ENCODE measurements at regions of chr3 and their contacts with region 1.

Region 1: DNA sequence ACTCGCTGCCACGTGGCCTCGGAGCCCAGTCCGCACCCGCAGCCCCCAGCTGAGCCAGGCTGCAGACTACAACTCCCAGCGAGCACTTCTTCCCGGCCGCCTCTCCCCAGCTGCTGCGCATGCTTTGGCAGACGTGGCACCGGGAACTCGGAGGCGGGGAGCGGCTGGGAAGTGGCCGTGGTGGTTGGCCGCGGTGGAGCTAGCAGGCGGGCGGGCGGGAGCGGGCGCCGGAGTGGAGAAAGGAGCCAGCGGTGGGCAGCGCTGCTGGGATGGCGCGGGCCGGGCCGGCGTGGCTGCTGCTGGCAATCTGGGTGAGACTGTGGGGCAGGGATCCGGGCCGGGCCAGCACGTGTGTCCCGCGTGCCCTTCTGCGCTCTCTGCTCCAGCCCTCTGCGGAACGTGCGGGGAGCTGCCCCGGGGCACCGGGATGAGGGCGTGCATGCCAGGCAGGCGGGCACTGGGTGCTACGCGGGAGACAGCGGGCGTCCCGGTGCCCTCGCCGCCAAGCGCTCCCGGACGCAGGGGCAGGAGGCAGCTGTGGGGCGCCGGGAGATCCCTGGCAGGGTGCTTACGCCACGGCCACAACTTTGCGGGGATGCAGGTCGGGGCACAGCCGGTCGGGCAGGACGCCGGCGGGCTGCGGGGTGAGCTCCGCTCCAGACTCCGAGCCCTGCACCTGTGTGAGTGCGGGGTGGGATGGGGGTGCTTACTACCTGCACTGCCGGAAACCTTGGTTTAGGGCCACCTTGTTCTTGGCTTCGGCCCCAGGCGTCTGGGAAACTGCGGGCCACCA is at the start of gene PDIA5:
- DNase-seq: peak; percentile 95
- ATAC-seq: peak; percentile 89
- H3K4me3 ChIP-seq: peak within 1 kb of the TSS; percentile 86
- H3K27ac ChIP-seq: peak within 1 kb of the TSS; percentile 25
- H3K4me1 ChIP-seq: peaks cover 15% of the 10 kb centered on the region
- H3K27me3 ChIP-seq: no peaks in the 10 kb centered on the region
- CTCF ChIP-seq: no peak
- total RNA-seq, gene PDIA5: 24.6 and 29.7 TPM in 2 replicates

Region 2: GRCh38 chr3:122415720-122416654 is 651.1 kb before region 1 on chr3 and contains the start of gene WDR5B:
- CTCF ChIA-PET with region 1: no interaction called
- POLR2A ChIA-PET with region 1: interaction called, 15 read pairs
- intact Hi-C with region 1: no loop called
- DNase-seq: peak; percentile 99
- ATAC-seq: peak; percentile 90
- H3K4me3 ChIP-seq: peak within 1 kb of the TSS; percentile 75
- H3K27ac ChIP-seq: peak within 1 kb of the TSS; percentile 74
- H3K4me1 ChIP-seq: peaks cover 27% of the 10 kb centered on the region
- H3K27me3 ChIP-seq: no peaks in the 10 kb centered on the region
- CTCF ChIP-seq: no peak
- total RNA-seq, gene WDR5B: 3.1 and 4.0 TPM in 2 replicates

Region 3: DNA sequence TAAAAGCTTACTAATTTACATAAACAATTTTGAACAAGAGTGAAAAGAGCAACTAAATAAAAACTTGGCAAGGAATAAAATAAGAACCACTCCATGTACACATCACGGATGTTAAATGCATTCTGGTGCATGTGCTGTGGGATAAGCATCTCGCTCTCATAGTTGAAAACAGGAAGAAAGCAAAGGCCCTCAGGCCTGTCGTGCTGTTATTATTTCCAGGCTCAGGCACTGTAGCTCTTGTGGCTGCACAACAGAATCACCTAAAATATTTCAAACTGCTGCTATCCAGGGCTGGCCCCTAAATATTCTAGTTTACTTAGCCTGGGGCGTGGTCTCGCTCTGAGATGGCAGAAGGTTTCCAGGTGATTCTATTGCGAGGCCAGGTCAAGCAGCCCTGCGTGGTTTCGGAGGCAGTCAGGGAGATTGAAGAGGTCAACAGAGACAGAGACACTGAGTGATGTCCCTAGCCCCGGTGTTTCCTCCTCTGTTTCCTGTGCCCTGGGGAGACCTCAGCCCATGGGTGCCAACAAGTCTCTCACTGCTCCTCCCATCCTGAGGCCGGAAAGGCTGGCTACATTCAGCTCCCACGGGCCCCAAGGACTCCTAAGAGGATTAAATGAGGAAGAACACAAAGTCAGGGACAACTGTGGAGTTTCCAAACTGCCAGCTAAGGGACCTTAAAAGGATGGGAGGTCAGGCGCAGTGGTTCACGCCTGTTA is 18.4 kb before region 1 on chr3:
- CTCF ChIA-PET with region 1: interaction called, 3 read pairs
- POLR2A ChIA-PET with region 1: interaction called, 11 read pairs
- intact Hi-C with region 1: no loop called
- DNase-seq: no peak
- ATAC-seq: no peak
- H3K4me3 ChIP-seq: no peak overlapping the region
- H3K27ac ChIP-seq: no peak overlapping the region
- H3K4me1 ChIP-seq: peaks cover 5% of the 10 kb centered on the region; the same call in 1 of the 2 replicates
- H3K27me3 ChIP-seq: peaks cover 8% of the 10 kb centered on the region; the same call in 1 of the 2 replicates
- CTCF ChIP-seq: no peak

Region 4: DNA sequence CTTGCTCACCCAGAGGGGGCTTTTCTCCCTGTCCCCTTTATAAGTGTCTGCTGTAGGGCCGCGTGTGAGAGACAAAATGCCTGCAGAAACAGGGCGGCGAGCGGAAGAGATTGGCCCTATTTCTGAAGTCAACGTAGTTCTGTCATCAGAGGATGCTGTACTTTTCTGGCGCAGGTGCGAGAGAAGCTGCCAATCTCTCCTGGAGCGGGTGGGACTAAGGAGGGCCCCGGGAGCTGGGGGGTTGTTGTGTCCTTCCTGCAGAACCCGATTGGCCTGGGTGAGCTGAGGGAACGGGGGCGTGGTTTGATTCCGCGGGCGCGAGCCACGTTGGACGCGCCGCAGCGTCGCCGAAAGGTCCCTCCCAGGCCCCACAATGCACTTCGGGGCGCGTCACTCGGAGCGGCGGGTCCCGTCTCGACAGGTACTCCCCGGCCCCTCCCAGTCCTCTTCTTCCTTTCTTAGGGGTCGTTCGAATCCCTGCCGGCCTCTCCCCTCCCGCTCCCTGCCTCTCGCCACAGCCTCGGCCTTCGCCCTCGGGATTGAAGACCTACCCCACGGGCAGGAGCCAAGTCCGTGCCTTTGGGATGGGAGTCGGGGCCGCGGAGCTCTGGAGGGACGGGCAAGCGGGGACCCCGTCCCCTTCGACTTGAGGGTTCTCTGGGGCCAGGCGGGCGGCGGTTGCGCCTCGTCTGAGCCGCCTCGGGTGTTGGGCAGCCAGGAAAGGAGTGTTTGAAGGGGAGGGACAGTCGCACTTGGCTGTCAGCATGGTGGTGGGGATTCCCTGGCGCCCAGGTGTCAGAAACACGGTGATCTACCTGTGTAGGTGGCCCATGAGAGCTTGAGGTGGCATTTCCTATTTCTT is 134.7 kb after region 1 on chr3 and contains the start of gene SEC22A:
- CTCF ChIA-PET with region 1: no interaction called
- POLR2A ChIA-PET with region 1: no interaction called
- intact Hi-C with region 1: loop called (anchors 5 kb)
- DNase-seq: peak; percentile 99
- ATAC-seq: peak; percentile 99
- H3K4me3 ChIP-seq: peak within 1 kb of the TSS; percentile 96
- H3K27ac ChIP-seq: peak within 1 kb of the TSS; percentile 25
- H3K4me1 ChIP-seq: peaks cover 14% of the 10 kb centered on the region
- H3K27me3 ChIP-seq: no peaks in the 10 kb centered on the region
- CTCF ChIP-seq: no peak
- total RNA-seq, gene SEC22A: 34.3 and 37.9 TPM in 2 replicates